ENCODE measurements at regions of chr6 and their contacts with region 1.

Region 1: DNA sequence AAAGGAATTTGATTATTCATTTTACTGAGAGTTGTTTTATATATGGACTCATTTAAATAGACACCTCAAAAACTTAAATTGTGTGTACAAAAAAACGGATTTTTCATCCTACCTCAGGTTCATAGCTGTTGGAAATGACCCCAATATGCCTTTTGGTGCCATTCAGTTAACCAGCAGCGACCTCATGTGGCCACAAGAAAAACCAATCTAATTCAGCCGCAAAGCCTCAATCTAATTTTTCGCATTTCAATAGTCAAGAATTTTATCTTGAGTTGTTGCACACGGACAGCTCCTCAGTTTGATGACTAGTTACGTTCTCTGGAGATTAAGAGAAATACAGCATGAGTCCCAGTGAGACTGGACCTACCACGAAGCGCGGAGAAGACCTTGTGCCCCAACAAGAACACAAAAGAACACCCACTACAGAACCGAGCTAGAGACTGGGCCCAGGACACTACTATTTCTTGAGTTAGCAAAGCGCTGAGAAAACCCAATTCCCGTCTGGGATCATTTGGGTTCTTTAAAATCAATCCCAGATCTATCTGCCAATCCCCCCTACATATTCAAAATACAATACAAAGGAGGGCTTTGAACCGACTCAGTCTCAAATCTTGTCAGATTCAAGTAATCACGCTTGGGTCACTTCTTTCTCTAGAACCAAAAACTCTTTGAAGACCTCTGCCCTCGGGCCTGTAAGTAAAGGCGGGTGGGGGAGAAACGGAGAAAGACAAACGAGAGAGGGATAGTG is 1.1 kb downstream of the TCP11 start:
- DNase-seq: peak in 8 of 9 experiments; percentile 29 to 80 (median 50)
- ATAC-seq: no peak
- H3K4me3 ChIP-seq: no peak overlapping the region
- H3K4me3 Mint-ChIP-seq: peak overlapping the region; percentile 4
- H3K27ac ChIP-seq: no peak overlapping the region
- H3K27ac Mint-ChIP-seq: no peak overlapping the region
- H3K4me1 ChIP-seq: peaks cover 7% of the 10 kb centered on the region
- H3K4me1 Mint-ChIP-seq: peaks cover 11% of the 10 kb centered on the region
- H3K27me3 ChIP-seq: peaks cover 5 to 9% of the 10 kb centered on the region in 2 experiments
- H3K27me3 Mint-ChIP-seq: peaks cover 19% of the 10 kb centered on the region
- CTCF ChIP-seq: peak; percentile 92

Region 2: DNA sequence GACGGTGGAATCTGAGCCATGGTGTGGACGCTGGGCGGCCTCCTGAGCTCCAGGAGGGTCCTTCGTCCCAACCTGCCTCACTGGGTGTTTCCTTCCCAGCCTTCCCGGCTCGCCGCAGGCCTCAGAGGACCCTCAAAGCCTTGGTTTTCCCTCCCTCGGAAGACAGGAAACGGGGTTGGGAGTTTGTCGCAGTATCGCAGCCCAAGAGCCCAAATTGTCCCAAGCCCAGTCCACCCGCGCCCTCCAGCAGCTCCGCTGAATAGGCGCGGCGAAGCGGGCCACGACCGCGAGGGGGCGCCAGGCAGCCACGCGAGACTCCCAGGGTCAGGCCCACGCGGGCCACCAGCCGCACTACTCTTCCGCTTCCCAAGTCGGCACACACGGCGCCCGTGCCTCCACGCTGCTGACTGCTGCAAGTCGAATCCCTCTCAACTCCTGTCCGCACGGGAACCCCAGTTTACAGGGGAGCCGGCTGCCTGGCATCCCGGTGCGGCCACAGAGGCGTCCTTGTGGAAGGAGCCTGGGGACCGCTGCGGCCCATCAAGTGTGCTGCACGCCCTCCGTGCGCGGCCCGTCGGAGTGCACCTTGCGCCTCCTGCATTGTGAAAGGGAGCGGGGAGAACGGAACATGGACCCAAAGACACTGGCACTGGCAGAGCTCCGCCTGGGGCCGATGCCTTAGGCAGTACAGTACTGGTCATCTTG is 943.8 kb before region 1 on chr6:
- CTCF ChIA-PET with region 1: interaction called, 4 read pairs
- POLR2A ChIA-PET with region 1: no interaction called
- intact Hi-C with region 1: loop called (anchors 1 to 2 kb)
- DNase-seq: peak; percentile 81 to 97 (median 90)
- ATAC-seq: peak; percentile 100
- H3K4me3 ChIP-seq: peak overlapping the region; percentile 67 to 89
- H3K4me3 Mint-ChIP-seq: peak overlapping the region; percentile 84
- H3K27ac ChIP-seq: peak overlapping the region in 1 of 2 experiments; percentile 32
- H3K27ac Mint-ChIP-seq: peak overlapping the region; percentile 32
- H3K4me1 ChIP-seq: peaks cover 10% of the 10 kb centered on the region
- H3K4me1 Mint-ChIP-seq: peaks cover 9% of the 10 kb centered on the region
- H3K27me3 ChIP-seq: no peaks in the 10 kb centered on the region
- H3K27me3 Mint-ChIP-seq: no peaks in the 10 kb centered on the region
- CTCF ChIP-seq: peak; percentile 85

Region 3: GRCh38 chr6:34526992-34527728 is 612.9 kb before region 1 on chr6:
- CTCF ChIA-PET with region 1: interaction called, 9 read pairs
- POLR2A ChIA-PET with region 1: no interaction called
- intact Hi-C with region 1: loop called in 1 of 2 experiments (anchors 2 kb)
- DNase-seq: peak; percentile 91 to 99 (median 96)
- ATAC-seq: peak; percentile 98
- H3K4me3 ChIP-seq: peak overlapping the region; percentile 17 to 31
- H3K4me3 Mint-ChIP-seq: peak overlapping the region; percentile 58
- H3K27ac ChIP-seq: peak overlapping the region; percentile 31 to 58
- H3K27ac Mint-ChIP-seq: peak overlapping the region; percentile 80
- H3K4me1 ChIP-seq: peaks cover 7% of the 10 kb centered on the region
- H3K4me1 Mint-ChIP-seq: peaks cover 14% of the 10 kb centered on the region
- H3K27me3 ChIP-seq: no peaks in the 10 kb centered on the region
- H3K27me3 Mint-ChIP-seq: no peaks in the 10 kb centered on the region
- CTCF ChIP-seq: peak; percentile 51

Region 4: GRCh38 chr6:34638834-34639736 is 501.0 kb before region 1 on chr6:
- CTCF ChIA-PET with region 1: no interaction called
- POLR2A ChIA-PET with region 1: no interaction called
- intact Hi-C with region 1: loop called in 1 of 2 experiments (anchors 10 kb)
- DNase-seq: peak in 1 of 9 experiments; percentile 11
- ATAC-seq: no peak
- H3K4me3 ChIP-seq: no peak overlapping the region
- H3K4me3 Mint-ChIP-seq: no peak overlapping the region
- H3K27ac ChIP-seq: no peak overlapping the region
- H3K27ac Mint-ChIP-seq: peak overlapping the region; percentile 2
- H3K4me1 ChIP-seq: no peaks in the 10 kb centered on the region
- H3K4me1 Mint-ChIP-seq: peaks cover 16% of the 10 kb centered on the region
- H3K27me3 ChIP-seq: no peaks in the 10 kb centered on the region
- H3K27me3 Mint-ChIP-seq: no peaks in the 10 kb centered on the region
- CTCF ChIP-seq: no peak

Region 5: GRCh38 chr6:34986845-34987246 is 153.2 kb before region 1 on chr6:
- CTCF ChIA-PET with region 1: interaction called, 34 read pairs
- POLR2A ChIA-PET with region 1: no interaction called
- intact Hi-C with region 1: loop called in 1 of 2 experiments (anchors 1 kb)
- DNase-seq: peak; percentile 16 to 75 (median 61)
- ATAC-seq: peak; percentile 66
- H3K4me3 ChIP-seq: no peak overlapping the region
- H3K4me3 Mint-ChIP-seq: no peak overlapping the region
- H3K27ac ChIP-seq: no peak overlapping the region
- H3K27ac Mint-ChIP-seq: no peak overlapping the region
- H3K4me1 ChIP-seq: no peaks in the 10 kb centered on the region
- H3K4me1 Mint-ChIP-seq: no peaks in the 10 kb centered on the region
- H3K27me3 ChIP-seq: no peaks in the 10 kb centered on the region
- H3K27me3 Mint-ChIP-seq: no peaks in the 10 kb centered on the region
- CTCF ChIP-seq: peak; percentile 71